Activated B cell treated with CpG ODN at 0.5 μM for 24 hours (primary cell): ENCODE measurements at regions of chr15 and their contacts with region 1.

Region 1: GRCh38 chr15:39782441-39783138 is at the start of gene FSIP1:
- DNase-seq: peak; percentile 98
- ATAC-seq: peak; percentile 98
- H3K4me3 Mint-ChIP-seq: peak within 1 kb of the TSS; percentile 98
- H3K27ac Mint-ChIP-seq: peak within 1 kb of the TSS; percentile 91
- H3K4me1 Mint-ChIP-seq: peaks cover 41% of the 10 kb centered on the region
- H3K27me3 Mint-ChIP-seq: peaks cover 4% of the 10 kb centered on the region
- CTCF ChIP-seq: no peak
- total RNA-seq, gene FSIP1: 0.32 and 0.53 TPM in 2 replicates

Region 2: GRCh38 chr15:39874890-39875549 is 92.4 kb after region 1 on chr15:
- CTCF ChIA-PET with region 1: no interaction called
- POLR2A ChIA-PET with region 1: no interaction called
- intact Hi-C with region 1: loop called (anchors 1 kb)
- DNase-seq: no peak
- ATAC-seq: no peak
- H3K4me3 Mint-ChIP-seq: no peak overlapping the region
- H3K27ac Mint-ChIP-seq: no peak overlapping the region
- H3K4me1 Mint-ChIP-seq: no peaks in the 10 kb centered on the region
- H3K27me3 Mint-ChIP-seq: peaks cover under 1% of the 10 kb centered on the region
- CTCF ChIP-seq: no peak

Region 3: GRCh38 chr15:39934397-39935071 is 151.9 kb after region 1 on chr15:
- CTCF ChIA-PET with region 1: no interaction called
- POLR2A ChIA-PET with region 1: interaction called, 3 read pairs
- intact Hi-C with region 1: loop called (anchors 1 kb)
- DNase-seq: no peak
- ATAC-seq: no peak
- H3K4me3 Mint-ChIP-seq: peak overlapping the region; percentile 96
- H3K27ac Mint-ChIP-seq: peak overlapping the region; percentile 50
- H3K4me1 Mint-ChIP-seq: peaks cover 32% of the 10 kb centered on the region
- H3K27me3 Mint-ChIP-seq: peaks cover 5% of the 10 kb centered on the region
- CTCF ChIP-seq: no peak

Region 4: DNA sequence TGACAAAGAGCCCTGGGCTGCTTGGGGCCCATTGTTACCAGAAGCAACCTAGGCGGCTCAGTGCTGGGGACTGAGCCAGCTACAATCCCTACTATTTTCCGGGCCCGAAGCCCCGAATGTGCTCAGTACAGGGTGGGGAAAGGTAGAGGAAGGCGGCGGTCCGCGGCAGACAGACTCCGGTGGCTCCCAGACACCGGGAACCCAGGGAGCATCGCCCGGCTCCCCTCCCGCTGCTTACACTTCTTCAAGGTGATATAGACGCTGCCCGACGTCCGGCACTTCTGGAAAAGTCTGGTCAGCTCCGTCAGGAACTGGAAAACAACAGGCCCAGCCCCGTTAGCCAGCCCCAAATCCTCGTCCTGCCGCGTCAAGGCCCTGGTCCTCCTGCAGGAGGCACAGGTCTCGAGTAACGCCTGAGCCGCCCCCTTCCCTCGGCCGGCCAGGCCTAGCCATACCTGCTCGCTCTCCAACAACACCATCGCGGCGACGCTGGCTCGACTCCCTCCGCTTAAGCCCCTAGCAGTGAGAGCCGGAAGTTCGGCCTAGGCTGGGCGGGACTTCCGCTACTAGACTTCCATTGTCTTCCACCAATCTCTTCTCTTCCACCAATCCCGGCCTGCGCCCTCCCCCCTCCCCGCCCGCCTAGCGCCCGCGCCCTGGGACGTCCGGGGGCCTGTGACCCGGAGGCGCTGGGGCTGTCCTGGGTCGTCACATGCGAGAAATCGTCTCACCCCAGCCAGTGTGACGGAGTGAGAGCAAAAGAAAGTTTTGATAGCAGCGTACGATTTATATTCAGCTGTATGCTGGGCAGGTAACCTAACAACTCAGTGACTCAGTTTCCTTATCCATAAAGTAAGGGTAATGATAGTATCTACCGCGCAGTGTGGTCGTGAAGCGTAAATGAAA is 256.3 kb after region 1 on chr15 and contains the start of gene SRP14:
- CTCF ChIA-PET with region 1: no interaction called
- POLR2A ChIA-PET with region 1: interaction called, 4 read pairs
- intact Hi-C with region 1: loop called (anchors 1 kb)
- DNase-seq: peak; percentile 89
- ATAC-seq: peak; percentile 97
- H3K4me3 Mint-ChIP-seq: peak within 1 kb of the TSS; percentile 99
- H3K27ac Mint-ChIP-seq: peak within 1 kb of the TSS; percentile 95
- H3K4me1 Mint-ChIP-seq: peaks cover 30% of the 10 kb centered on the region
- H3K27me3 Mint-ChIP-seq: no peaks in the 10 kb centered on the region
- CTCF ChIP-seq: no peak
- total RNA-seq, gene SRP14: 183 and 217 TPM in 2 replicates

Region 5: DNA sequence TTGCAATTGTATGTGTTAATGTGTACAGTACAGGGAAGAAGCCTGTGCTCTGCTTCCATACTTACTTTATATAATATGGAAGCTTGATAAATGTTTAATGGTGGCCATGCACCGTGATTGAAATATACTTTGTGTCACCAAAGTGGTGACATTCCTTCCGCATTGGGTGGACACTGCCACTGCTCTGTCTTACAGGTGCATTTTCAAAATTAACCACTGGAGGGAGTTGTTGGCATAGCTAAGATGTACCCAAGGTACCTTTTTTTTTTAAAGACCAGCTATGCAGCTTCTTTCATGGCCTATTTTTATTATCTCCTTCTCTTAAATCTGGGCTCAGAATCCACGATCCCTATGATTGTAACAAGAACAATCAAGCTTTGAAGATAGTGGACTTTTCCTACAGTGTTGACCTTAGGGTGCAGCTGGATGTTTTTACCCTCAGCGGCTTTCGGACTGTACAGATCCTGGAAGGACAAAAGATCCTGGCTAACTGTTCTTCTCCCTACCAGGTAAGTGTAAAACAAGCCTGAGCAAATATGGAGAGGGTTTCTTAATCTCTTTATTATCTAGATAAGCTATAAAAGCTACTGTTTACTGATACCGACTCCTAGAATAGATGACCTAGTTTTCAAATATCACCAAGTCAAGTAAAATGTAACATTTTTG is 434.7 kb after region 1 on chr15:
- CTCF ChIA-PET with region 1: interaction called, 6 read pairs
- POLR2A ChIA-PET with region 1: no interaction called
- intact Hi-C with region 1: loop called (anchors 2 kb)
- DNase-seq: no peak
- ATAC-seq: peak; percentile 100
- H3K4me3 Mint-ChIP-seq: no peak overlapping the region
- H3K27ac Mint-ChIP-seq: no peak overlapping the region
- H3K4me1 Mint-ChIP-seq: no peaks in the 10 kb centered on the region
- H3K27me3 Mint-ChIP-seq: no peaks in the 10 kb centered on the region
- CTCF ChIP-seq: peak; percentile 41

Region 6: DNA sequence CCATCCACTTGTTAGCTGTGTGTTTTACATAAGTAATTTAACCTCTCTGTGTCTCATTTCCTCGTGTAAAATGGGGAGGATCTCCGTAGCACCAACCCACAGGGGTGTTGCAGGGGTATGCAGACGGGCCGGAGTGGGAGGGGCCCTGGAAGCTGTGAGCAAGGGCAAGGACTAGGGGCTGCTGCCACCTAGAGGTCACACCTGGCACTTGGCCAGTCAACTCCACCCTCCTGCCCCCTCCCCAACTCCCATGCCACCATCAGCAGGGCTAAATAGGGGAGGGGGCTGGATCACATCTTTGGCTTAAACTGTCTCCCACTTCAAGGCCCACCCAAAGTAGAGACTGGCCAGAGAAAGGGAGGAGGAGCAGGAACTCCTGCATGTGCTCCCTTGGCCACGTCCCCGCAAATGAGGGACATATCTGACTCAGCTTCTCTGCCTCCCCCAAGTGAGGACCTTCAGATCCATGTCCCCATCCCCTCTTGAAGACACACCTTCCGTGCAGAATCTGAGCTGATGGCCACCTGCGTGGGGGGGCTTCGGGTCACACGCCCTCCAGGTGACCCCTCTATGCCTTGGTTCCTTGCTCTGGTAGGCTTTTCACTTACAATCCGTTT is 555.6 kb after region 1 on chr15:
- CTCF ChIA-PET with region 1: no interaction called
- POLR2A ChIA-PET with region 1: no interaction called
- intact Hi-C with region 1: loop called (anchors 1 kb)
- DNase-seq: peak; percentile 67
- ATAC-seq: peak; percentile 96
- H3K4me3 Mint-ChIP-seq: no peak overlapping the region
- H3K27ac Mint-ChIP-seq: no peak overlapping the region
- H3K4me1 Mint-ChIP-seq: peaks cover 24% of the 10 kb centered on the region
- H3K27me3 Mint-ChIP-seq: no peaks in the 10 kb centered on the region
- CTCF ChIP-seq: peak; percentile 17

Region 7: GRCh38 chr15:40440743-40441564 is 658.4 kb after region 1 on chr15 and contains the start of gene BAHD1:
- CTCF ChIA-PET with region 1: no interaction called
- POLR2A ChIA-PET with region 1: no interaction called
- intact Hi-C with region 1: loop called (anchors 10 kb)
- DNase-seq: peak; percentile 93
- ATAC-seq: peak; percentile 92
- H3K4me3 Mint-ChIP-seq: peak within 1 kb of the TSS; percentile 88
- H3K27ac Mint-ChIP-seq: peak within 1 kb of the TSS; percentile 68
- H3K4me1 Mint-ChIP-seq: peaks cover 59% of the 10 kb centered on the region
- H3K27me3 Mint-ChIP-seq: peaks cover 22% of the 10 kb centered on the region
- CTCF ChIP-seq: no peak
- total RNA-seq, gene BAHD1: 27.5 and 28.4 TPM in 2 replicates